ENCODE measurements at regions of chr7 and their contacts with region 1.

Region 1: DNA sequence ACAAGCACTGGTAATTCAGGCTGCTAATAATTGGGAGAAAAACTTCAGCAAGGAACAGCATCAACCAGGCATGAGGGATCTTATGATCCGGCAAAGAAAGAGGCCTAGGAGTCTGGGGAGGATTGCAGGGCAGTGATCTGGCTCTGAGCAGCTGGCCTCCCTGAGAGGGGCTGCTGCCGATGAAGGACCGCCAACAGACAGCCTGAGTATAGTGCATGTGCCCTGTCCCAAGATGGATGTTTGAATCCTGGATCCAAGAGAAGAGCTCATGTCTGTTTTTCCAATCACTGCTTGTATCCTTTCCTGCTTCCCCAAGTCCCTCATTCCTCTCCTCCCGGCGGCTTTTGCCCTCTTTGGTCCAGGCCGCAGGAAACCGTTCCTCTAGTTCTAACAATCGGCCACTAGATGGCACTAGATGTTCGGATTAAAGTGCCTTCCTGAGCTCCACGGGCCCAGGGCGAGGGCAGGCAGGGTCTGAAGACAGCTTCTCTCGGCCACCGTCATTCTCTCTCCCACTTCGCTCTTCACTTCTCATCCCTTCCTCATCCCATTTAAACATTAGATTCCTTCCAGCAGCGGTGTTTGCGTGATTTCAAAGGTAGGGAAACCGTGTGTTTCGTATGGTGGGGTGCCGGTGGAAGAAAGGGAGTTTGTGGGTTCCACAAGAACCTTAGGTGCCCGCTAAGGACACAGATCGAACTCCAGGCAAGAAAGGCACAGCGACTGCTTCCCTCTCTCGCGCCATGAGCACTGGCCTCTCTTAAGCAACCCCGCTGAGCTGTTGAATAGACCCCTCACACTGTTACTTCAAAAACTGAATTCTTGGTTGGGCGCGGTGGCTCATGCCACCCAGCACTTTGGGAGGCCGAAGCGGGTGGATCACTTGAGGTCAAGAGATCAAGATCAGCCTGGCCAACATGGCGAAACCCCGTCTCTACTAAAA is 82.4 kb downstream of the ADCYAP1R1 start:
- DNase-seq: peak; percentile 86
- H3K4me3 ChIP-seq: no peak overlapping the region; a peak in 1 of 4 replicates
- H3K27ac ChIP-seq: no peak overlapping the region
- H3K4me1 ChIP-seq: no peaks in the 10 kb centered on the region; a peak in 1 of 4 replicates
- H3K27me3 ChIP-seq: peaks cover 10% of the 10 kb centered on the region; the same call in 1 of the 2 replicates
- CTCF ChIP-seq: peak; percentile 88
- EP300 ChIP-seq: no peak
- RAD21 ChIP-seq: peak; percentile 91

Region 2: DNA sequence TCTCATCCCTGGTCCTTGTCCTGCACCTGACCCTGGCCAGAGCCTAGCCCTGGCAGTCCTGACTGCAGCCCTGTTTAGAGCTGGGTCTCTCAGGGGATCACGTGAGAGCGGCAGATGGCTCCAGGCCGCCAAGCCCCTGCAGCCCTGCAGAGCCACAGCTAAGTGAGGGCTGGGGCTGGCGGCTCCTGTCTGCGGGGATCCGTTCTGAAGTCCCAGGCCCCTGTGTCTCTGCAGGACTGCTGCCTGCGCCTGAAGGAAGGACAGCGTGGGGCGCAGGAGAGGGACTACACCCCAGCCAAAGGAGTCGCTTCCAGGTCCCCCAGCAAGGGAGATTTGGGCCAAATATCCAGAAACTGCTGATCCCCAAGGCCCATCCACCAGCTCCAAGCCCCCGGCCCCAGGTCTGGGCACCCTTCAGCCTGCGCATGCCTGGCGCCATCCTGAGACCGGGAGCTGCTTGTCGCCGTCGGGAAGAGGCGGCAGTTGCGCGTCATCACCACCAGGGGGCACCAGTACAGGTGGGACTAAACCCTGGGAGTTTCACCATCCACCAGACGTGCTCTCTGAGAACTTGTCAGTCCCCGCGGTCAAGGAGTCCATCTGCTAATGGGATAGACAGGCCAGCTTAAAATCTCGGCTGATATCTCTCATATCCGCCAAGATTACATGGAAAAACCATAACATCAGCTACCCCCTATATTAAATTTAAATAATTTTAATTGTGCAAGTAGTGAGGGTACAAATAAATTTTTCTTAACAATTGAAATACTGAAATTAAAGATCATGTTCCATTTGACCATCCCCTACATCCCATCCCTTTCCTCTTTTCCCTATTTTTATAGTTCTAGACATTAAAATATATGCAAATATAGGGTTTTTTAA is 195.8 kb before region 1 on chr7:
- CTCF ChIA-PET with region 1: interaction called, 17 read pairs
- POLR2A ChIA-PET with region 1: no interaction called
- DNase-seq: peak; percentile 92
- H3K4me3 ChIP-seq: peak overlapping the region; percentile 33 to 54; a peak in 3 of 4 replicates
- H3K27ac ChIP-seq: peak overlapping the region in 1 of 2 experiments; percentile 67; a peak in 1 of 4 replicates
- H3K4me1 ChIP-seq: peaks cover 0 to 7% of the 10 kb centered on the region in 2 experiments; a peak in 1 of 4 replicates
- H3K27me3 ChIP-seq: no peaks in the 10 kb centered on the region; the same call in 1 of the 2 replicates
- CTCF ChIP-seq: peak; percentile 99
- EP300 ChIP-seq: no peak
- RAD21 ChIP-seq: peak; percentile 76

Region 3: GRCh38 chr7:30988351-30989000 is 146.0 kb before region 1 on chr7:
- CTCF ChIA-PET with region 1: interaction called, 1,191 read pairs
- POLR2A ChIA-PET with region 1: no interaction called
- DNase-seq: peak; percentile 68
- H3K4me3 ChIP-seq: no peak overlapping the region
- H3K27ac ChIP-seq: no peak overlapping the region
- H3K4me1 ChIP-seq: peaks cover 0 to 8% of the 10 kb centered on the region in 2 experiments; a peak in 1 of 4 replicates
- H3K27me3 ChIP-seq: no peaks in the 10 kb centered on the region
- CTCF ChIP-seq: no peak
- EP300 ChIP-seq: no peak
- RAD21 ChIP-seq: no peak

Region 4: DNA sequence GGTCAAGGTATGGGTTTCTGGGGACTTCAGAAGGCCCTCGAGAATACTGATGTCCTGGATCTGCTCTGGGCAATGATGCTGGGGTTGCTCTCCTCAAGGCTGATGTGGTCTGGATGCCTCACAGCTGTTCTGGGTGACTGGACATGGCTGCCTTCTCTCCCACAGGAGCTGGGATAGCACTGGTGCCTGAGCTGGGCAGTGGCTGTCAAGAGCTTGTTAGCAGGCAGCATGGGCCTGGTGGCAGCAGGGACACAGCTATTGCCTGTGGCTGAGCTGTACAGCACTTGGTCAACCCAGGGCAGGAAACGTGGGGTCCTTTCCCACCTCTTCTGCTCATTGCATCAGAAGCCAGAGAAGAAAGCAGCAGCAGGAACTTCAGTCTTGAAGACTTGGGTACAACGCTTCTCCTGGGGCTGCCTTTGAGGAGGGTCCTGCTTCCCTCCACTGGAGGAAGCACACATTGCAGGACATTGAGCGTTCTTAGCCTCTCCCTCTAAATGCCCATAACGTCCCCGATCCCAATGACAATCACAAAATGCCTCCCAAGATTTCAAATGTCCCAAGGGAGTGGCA is 69.4 kb before region 1 on chr7:
- CTCF ChIA-PET with region 1: interaction called, 11 read pairs
- POLR2A ChIA-PET with region 1: no interaction called
- DNase-seq: no peak
- H3K4me3 ChIP-seq: no peak overlapping the region
- H3K27ac ChIP-seq: no peak overlapping the region
- H3K4me1 ChIP-seq: peaks cover 0 to 9% of the 10 kb centered on the region in 2 experiments; a peak in 1 of 4 replicates
- H3K27me3 ChIP-seq: peaks cover 5% of the 10 kb centered on the region; the same call in 1 of the 2 replicates
- CTCF ChIP-seq: no peak
- EP300 ChIP-seq: no peak
- RAD21 ChIP-seq: no peak

Region 5: GRCh38 chr7:31160941-31161340 is 26.4 kb after region 1 on chr7:
- CTCF ChIA-PET with region 1: interaction called, 21 read pairs
- POLR2A ChIA-PET with region 1: no interaction called
- DNase-seq: no peak
- H3K4me3 ChIP-seq: no peak overlapping the region
- H3K27ac ChIP-seq: no peak overlapping the region
- H3K4me1 ChIP-seq: no peaks in the 10 kb centered on the region
- H3K27me3 ChIP-seq: 0 out of 2 replicates have a peak, but pooled peaks cover 4% of the 10 kb centered on the region
- CTCF ChIP-seq: no peak
- EP300 ChIP-seq: no peak
- RAD21 ChIP-seq: no peak

Region 6: DNA sequence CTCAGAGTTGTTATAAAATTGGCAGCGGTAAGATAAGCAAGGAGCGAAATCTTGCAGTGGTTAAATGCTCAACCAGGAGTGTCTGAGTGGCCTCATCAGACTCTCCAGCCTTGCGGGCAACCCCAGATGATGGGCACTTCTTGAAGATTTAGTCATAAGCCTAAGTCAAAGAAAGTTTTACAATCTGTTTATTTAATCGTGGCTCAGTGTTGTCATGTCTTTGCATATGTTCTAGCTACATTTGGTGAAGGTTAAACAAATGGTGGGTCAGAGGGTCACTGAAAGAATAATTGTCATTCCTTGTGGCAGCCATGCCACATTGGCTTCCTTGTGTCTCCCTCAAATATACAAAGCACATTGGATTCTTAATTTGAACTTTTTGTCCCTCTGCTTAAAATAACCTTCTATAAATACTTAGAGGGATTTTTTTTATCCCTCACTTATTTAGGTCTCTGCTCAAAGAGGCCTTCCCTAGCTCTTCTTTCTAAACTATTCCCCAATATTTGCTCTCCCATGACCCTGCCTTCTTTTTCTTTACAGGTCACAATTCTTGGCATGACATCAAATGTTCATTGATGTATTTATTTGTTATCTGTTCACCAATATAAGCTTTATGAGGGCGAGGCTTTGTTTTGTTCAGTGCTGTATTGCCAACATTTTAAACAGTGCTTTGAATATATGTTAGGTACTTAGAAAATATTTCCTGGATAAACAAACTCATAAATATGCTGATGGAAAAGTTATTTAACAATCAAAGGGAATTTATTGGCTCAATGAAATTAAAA is 137.3 kb after region 1 on chr7:
- CTCF ChIA-PET with region 1: no interaction called
- POLR2A ChIA-PET with region 1: no interaction called
- DNase-seq: no peak
- H3K4me3 ChIP-seq: no peak overlapping the region
- H3K27ac ChIP-seq: no peak overlapping the region
- H3K4me1 ChIP-seq: no peaks in the 10 kb centered on the region
- H3K27me3 ChIP-seq: peaks cover 4% of the 10 kb centered on the region; the same call in 1 of the 2 replicates
- CTCF ChIP-seq: no peak
- EP300 ChIP-seq: no peak
- RAD21 ChIP-seq: no peak

Region 7: DNA sequence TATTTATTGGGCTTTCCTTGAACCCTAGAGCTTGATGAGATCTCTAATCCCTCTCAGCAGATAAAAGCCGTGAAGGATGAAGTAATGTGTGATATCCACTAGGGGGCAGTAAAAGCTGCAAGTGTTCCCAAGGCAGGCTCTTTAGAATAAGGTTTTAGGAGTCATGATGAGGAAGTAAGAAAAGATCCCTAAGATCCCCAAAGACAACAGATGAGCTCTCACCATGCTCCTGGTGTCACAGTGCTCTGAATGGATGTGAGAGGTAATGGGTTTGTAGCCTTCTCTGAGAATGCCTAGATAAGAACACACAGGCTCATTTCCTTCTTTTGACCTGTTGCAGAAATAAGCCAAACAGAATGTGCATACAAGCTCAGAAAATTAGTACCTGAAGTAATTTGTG is 308.9 kb after region 1 on chr7:
- CTCF ChIA-PET with region 1: interaction called, 33 read pairs
- POLR2A ChIA-PET with region 1: no interaction called
- DNase-seq: peak; percentile 45
- H3K4me3 ChIP-seq: no peak overlapping the region; a peak in 1 of 4 replicates
- H3K27ac ChIP-seq: no peak overlapping the region
- H3K4me1 ChIP-seq: no peaks in the 10 kb centered on the region
- H3K27me3 ChIP-seq: peaks cover 25% of the 10 kb centered on the region
- CTCF ChIP-seq: peak; percentile 98
- EP300 ChIP-seq: no peak
- RAD21 ChIP-seq: peak; percentile 78

Region 8: GRCh38 chr7:31633894-31634494 is 499.5 kb after region 1 on chr7:
- CTCF ChIA-PET with region 1: interaction called, 12 read pairs
- POLR2A ChIA-PET with region 1: no interaction called
- DNase-seq: peak; percentile 41
- H3K4me3 ChIP-seq: no peak overlapping the region; a peak in 1 of 4 replicates
- H3K27ac ChIP-seq: no peak overlapping the region
- H3K4me1 ChIP-seq: no peaks in the 10 kb centered on the region
- H3K27me3 ChIP-seq: peaks cover 19% of the 10 kb centered on the region
- CTCF ChIP-seq: peak; percentile 73
- EP300 ChIP-seq: no peak
- RAD21 ChIP-seq: peak; percentile 69

Region 9: GRCh38 chr7:31850066-31850465 is 715.5 kb after region 1 on chr7:
- CTCF ChIA-PET with region 1: no interaction called
- POLR2A ChIA-PET with region 1: no interaction called
- DNase-seq: no peak
- H3K4me3 ChIP-seq: no peak overlapping the region
- H3K27ac ChIP-seq: no peak overlapping the region
- H3K4me1 ChIP-seq: no peaks in the 10 kb centered on the region
- H3K27me3 ChIP-seq: no peaks in the 10 kb centered on the region
- CTCF ChIP-seq: no peak
- EP300 ChIP-seq: no peak
- RAD21 ChIP-seq: no peak